ENCODE measurements at regions of chr19 and their contacts with region 1.

Region 1: GRCh38 chr19:50025024-50025789 is at the start of gene VRK3:
- DNase-seq: peak; percentile 98
- ATAC-seq: peak; percentile 91
- H3K4me3 Mint-ChIP-seq: peak within 1 kb of the TSS; percentile 85
- H3K27ac Mint-ChIP-seq: peak within 1 kb of the TSS; percentile 95
- H3K4me1 Mint-ChIP-seq: peaks cover 44% of the 10 kb centered on the region
- H3K27me3 Mint-ChIP-seq: no peaks in the 10 kb centered on the region
- total RNA-seq, gene VRK3: 52.4 to 61.2 TPM

Region 2: GRCh38 chr19:49421039-49421877 is 603.9 kb before region 1 on chr19:
- CTCF ChIA-PET with region 1: no interaction called
- POLR2A ChIA-PET with region 1: no interaction called
- intact Hi-C with region 1: no loop called
- DNase-seq: peak; percentile 73
- ATAC-seq: peak; percentile 51
- H3K4me3 Mint-ChIP-seq: peak overlapping the region; percentile 14
- H3K27ac Mint-ChIP-seq: no peak overlapping the region
- H3K4me1 Mint-ChIP-seq: peaks cover 32% of the 10 kb centered on the region
- H3K27me3 Mint-ChIP-seq: peaks cover 60% of the 10 kb centered on the region

Region 3: GRCh38 chr19:49590071-49590970 is 434.9 kb before region 1 on chr19:
- CTCF ChIA-PET with region 1: no interaction called
- POLR2A ChIA-PET with region 1: no interaction called
- intact Hi-C with region 1: loop called in 1 of 2 experiments (anchors 1 kb)
- DNase-seq: peak; percentile 98
- ATAC-seq: peak; percentile 80
- H3K4me3 Mint-ChIP-seq: peak overlapping the region; percentile 79
- H3K27ac Mint-ChIP-seq: peak overlapping the region; percentile 84
- H3K4me1 Mint-ChIP-seq: peaks cover 28% of the 10 kb centered on the region
- H3K27me3 Mint-ChIP-seq: no peaks in the 10 kb centered on the region

Region 4: DNA sequence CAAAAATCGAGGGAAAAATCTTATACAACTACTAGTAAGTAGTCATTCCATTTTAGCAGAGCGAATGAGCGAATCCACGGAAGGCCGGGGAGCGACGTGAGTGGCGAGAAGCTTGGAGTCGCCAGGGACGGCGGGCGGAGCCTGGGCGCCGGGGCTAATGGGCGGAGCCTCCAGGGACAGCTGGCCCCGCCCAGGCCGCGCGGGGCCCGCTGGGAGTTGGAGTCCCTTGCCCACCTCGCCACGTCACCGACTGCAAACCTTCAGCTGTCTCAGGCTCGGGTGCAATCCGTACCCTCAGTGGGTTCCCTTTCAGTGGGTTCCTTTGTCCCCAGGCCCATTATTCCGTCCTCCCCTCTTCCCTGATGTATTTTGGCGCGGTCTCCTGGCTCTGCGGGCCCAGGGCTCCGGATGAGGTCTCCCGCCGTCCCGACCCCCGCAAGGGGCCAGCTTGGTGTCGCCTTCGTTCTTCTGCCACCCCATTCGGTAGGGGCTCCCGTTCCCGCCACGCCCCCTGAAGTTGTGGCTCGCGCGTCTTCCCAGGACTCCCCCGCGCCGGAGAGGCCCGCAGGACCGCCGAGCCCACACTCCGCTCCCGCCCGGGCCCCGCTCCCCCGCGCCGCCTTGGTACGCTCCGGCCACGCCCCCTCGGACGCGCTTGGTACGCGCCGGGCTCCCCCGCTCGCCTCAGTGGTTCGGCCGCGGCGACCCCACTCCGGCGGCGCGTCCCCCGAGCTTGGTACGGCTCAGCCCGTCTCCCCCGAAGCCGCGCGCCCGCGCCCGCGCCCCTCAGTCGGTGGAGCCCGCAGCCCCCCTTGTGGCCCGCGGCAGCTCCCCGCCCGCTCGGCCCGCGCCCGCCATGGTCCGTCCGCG is 174.5 kb before region 1 on chr19 and contains the start of gene PTOV1:
- CTCF ChIA-PET with region 1: no interaction called
- POLR2A ChIA-PET with region 1: no interaction called
- intact Hi-C with region 1: loop called in 1 of 2 experiments (anchors 1 kb)
- DNase-seq: peak; percentile 95
- ATAC-seq: peak; percentile 91
- H3K4me3 Mint-ChIP-seq: peak within 1 kb of the TSS; percentile 85
- H3K27ac Mint-ChIP-seq: peak within 1 kb of the TSS; percentile 91
- H3K4me1 Mint-ChIP-seq: peaks cover 36% of the 10 kb centered on the region
- H3K27me3 Mint-ChIP-seq: no peaks in the 10 kb centered on the region
- total RNA-seq, gene PTOV1: 76.9 to 104 TPM

Region 5: DNA sequence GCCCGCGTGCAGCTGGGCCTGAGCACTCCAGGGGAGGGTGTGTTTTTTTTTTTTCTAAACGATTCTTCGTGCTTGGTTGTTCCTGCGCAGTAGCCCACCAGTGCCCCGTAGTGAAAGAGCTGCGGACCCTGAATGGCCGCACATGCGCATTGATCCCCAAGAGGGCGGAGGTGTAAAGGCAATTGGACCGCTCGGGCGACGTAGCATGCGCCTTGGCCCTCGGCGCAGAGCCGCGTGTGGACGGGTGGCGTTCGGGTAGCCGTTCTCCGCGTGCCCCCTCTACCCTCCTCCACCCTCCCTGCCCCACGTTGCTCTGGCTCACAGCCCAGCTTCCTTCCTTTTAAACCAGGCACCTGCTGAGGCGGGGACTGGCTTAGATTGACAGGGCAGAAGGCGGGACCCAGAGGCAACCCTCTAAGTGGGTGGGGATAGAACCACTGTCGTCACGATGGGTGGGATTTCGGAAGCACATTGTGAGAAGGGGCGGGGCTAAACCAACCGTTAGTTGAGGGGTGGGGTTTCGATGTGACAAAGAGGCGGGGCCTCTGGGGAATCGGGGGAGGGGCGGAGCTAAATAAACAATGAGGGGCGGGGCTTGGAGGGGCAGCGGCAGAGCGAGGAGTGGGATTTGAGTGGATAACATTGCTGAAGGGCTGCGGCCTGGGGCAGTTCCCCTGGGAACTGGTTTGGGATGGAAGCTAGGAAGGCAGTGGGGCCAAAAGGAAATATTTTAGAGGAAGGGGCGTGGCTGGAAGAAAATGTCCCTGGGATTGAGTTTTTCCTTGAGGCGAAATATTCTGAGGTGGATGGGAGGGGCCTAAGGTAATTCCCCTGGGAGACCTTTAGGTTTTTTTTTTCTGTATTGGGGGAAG is 95.4 kb before region 1 on chr19:
- CTCF ChIA-PET with region 1: no interaction called
- POLR2A ChIA-PET with region 1: no interaction called
- intact Hi-C with region 1: loop called (anchors 1 kb)
- DNase-seq: peak; percentile 97
- ATAC-seq: peak; percentile 91
- H3K4me3 Mint-ChIP-seq: peak overlapping the region; percentile 96
- H3K27ac Mint-ChIP-seq: peak overlapping the region; percentile 98
- H3K4me1 Mint-ChIP-seq: peaks cover 59% of the 10 kb centered on the region
- H3K27me3 Mint-ChIP-seq: no peaks in the 10 kb centered on the region

Region 6: GRCh38 chr19:49968279-49968922 is 56.8 kb before region 1 on chr19:
- CTCF ChIA-PET with region 1: no interaction called
- POLR2A ChIA-PET with region 1: no interaction called
- intact Hi-C with region 1: no loop called
- DNase-seq: no peak
- ATAC-seq: no peak
- H3K4me3 Mint-ChIP-seq: no peak overlapping the region
- H3K27ac Mint-ChIP-seq: no peak overlapping the region
- H3K4me1 Mint-ChIP-seq: no peaks in the 10 kb centered on the region
- H3K27me3 Mint-ChIP-seq: peaks cover 15% of the 10 kb centered on the region

Region 7: GRCh38 chr19:50329146-50329925 is 304.1 kb after region 1 on chr19 and contains the start of gene KCNC3:
- CTCF ChIA-PET with region 1: no interaction called
- POLR2A ChIA-PET with region 1: no interaction called
- intact Hi-C with region 1: loop called in 1 of 2 experiments (anchors 1 kb)
- DNase-seq: peak; percentile 99
- ATAC-seq: peak; percentile 67
- H3K4me3 Mint-ChIP-seq: peak within 1 kb of the TSS; percentile 75
- H3K27ac Mint-ChIP-seq: peak within 1 kb of the TSS; percentile 86
- H3K4me1 Mint-ChIP-seq: peaks cover 59% of the 10 kb centered on the region
- H3K27me3 Mint-ChIP-seq: peaks cover 33% of the 10 kb centered on the region
- total RNA-seq, gene KCNC3: 9.1 to 9.7 TPM

Region 8: DNA sequence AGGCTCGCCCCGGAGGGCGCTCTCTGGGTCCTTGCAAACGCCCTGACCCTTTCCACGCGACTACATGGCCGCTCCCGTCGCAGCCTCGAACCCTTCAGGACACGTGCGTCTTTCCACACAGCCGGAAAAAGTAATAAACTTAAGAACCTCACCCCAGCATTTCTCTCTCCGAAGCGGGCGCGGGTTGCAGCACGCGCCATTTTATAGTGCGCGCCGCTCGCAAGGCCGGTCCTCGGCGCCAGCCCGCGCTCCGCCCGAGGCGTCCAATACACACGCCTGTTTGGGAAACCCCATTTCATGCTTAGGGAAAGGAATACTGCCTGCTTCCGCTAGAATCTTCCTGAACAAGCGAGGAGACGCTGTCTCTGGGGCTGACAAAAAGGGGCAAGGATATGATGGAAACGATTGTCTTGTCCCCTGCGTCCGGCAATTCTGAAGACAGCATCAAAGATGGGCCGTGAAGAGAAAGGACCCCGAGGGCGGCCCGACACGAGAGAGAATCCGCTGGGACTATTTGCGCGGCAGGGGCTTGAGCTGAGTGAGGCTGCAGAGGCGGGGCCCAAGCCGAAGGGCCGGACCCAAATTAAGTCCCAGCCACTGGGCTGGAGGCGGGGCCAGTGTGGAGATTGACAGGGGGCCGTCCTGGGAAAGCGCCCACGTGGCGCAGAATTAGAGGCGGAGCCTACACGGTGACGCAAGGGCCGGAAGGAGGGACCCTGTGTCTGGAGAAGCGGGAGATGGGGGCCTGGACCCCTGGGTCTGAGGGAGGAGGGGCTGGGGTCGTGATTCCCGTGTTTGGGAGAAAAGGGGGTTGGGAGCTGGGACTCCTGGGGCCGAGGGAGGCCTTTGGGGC is 779.4 kb after region 1 on chr19:
- CTCF ChIA-PET with region 1: no interaction called
- POLR2A ChIA-PET with region 1: no interaction called
- intact Hi-C with region 1: loop called in 1 of 2 experiments (anchors 1 kb)
- DNase-seq: peak; percentile 99
- ATAC-seq: peak; percentile 99
- H3K4me3 Mint-ChIP-seq: peak overlapping the region; percentile 96
- H3K27ac Mint-ChIP-seq: peak overlapping the region; percentile 98
- H3K4me1 Mint-ChIP-seq: peaks cover 35% of the 10 kb centered on the region
- H3K27me3 Mint-ChIP-seq: no peaks in the 10 kb centered on the region